GM10248 (cell line): ENCODE measurements at regions of chr1 and their contacts with region 1.

Region 1: GRCh38 chr1:69737527-69738185 is 169.9 kb downstream of the LRRC7 start:
- DNase-seq: peak; percentile 10
- CTCF ChIP-seq: peak; percentile 50

Region 2: GRCh38 chr1:68470388-68470970 is 1267.2 kb before region 1 on chr1:
- CTCF ChIA-PET with region 1: interaction called, 13 read pairs
- POLR2A ChIA-PET with region 1: no interaction called
- DNase-seq: no peak
- CTCF ChIP-seq: peak; percentile 45

Region 3: DNA sequence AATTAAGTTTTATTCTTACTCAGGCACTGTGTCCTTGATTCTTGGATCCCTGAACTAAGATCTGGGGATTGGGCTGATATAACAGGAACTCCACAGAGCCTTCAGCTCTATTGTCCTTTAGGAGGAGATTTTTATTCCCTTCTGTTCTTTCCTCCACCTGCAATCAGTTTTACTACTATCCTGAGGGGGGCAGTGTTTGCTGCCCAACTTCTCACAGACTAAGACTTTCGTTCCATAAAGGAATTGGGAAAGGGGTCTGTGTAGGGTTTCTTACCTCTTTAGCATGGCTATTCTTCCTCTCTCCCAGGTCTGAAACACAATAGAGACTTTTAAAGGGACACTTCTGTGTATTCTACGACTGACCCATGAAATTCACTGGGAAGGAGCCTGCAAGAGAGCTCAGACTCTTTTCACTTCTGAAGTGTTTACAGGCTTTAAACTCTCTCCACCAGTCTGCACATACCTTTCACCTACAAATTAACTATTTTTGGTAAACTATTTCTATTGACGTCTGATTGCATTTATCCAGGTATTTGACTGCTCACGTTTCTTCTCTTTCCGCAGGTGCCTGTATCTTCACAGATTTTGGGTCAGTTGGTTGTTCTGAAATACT is 1137.5 kb before region 1 on chr1:
- CTCF ChIA-PET with region 1: interaction called, 11 read pairs
- POLR2A ChIA-PET with region 1: no interaction called
- DNase-seq: no peak
- CTCF ChIP-seq: peak; percentile 37

Region 4: DNA sequence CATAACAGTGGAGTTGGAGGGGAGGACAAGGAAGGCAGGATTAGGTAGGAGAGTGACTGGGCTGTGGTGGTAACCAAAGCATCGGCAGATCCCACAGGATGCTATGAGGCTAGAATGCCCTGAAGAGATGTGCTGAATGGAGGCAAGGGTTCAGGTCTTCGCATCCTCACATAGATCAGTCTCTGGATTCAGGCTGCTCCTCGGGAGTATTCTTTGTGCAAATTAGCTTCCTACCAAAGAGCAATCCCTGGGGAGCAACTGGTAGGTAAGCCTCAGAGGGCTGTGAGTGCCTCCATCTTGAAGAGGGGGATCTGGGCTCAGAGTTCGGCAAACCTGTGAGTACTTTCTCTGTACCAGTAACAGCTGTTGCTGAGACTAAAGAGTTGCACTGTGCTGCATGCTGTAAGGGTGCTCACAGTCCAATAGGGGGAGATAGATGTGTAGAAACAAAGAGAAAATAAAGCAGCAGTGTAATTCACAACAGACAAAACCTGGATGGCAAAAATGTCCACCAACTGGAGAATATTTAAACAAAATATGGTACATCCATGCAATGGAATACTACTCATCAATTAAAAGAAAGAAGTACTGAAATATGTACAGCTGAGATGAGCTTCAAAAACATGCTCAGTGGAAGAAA is 918.3 kb before region 1 on chr1:
- CTCF ChIA-PET with region 1: interaction called, 12 read pairs
- POLR2A ChIA-PET with region 1: no interaction called
- DNase-seq: no peak
- CTCF ChIP-seq: peak; percentile 22

Region 5: GRCh38 chr1:69750638-69751037 is 13.0 kb after region 1 on chr1:
- CTCF ChIA-PET with region 1: interaction called, 10 read pairs
- POLR2A ChIA-PET with region 1: no interaction called
- DNase-seq: no peak
- CTCF ChIP-seq: no peak